Naive thymus-derived CD4-positive, alpha-beta T cell (primary cell): ENCODE measurements at regions of chr12 and their contacts with region 1.

Region 1: DNA sequence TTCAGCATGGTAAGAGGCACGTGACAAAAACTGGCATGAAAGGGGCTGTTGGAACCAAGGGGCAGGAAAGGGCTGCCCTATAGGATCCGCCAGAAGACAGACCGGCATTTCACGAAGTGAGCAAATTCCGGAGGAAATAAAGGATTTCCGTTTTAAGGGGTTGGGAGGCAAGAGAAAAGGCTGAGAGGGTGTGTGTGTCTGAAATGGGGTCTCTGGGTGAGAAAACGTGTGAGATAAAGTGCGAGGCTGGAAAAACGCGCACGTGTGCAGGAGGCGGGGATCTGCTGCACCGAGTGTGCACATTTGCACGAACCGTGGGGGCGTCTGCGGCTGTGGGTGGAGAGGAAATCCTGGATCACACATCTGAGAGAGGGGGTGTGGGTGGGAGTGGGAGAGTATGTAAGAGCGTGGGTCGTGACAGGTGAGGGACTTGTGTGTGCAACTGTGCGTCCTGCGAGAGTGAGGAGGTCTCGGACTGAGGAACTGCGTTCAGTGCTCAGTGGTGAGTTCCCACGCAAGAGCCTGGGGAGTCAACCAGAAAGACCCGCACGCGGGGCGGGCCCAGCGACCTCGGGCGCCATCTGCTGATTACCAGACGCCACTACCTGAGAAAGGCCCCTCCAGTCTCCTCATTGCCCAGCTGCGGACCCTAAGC is 37.0 kb upstream of the P2RX7 start:
- DNase-seq: peak; percentile 60 to 81 (median 70)
- ATAC-seq: peak; percentile 91
- H3K4me3 ChIP-seq: peak overlapping the region; percentile 66
- H3K4me3 Mint-ChIP-seq: peak overlapping the region; percentile 81 to 95 (median 87)
- H3K27ac ChIP-seq: no peak overlapping the region
- H3K27ac Mint-ChIP-seq: peak overlapping the region in 6 of 9 donors; percentile 41 to 88 (median 69)
- H3K4me1 ChIP-seq: peaks cover 34 to 42% of the 10 kb centered on the region in 2 donors
- H3K4me1 Mint-ChIP-seq: peaks cover 28 to 56% (median 52%) of the 10 kb centered on the region in 7 donors
- H3K27me3 ChIP-seq: no peaks in the 10 kb centered on the region
- H3K27me3 Mint-ChIP-seq: peaks cover 0 to 22% (median 4%) of the 10 kb centered on the region in 5 donors

Region 2: DNA sequence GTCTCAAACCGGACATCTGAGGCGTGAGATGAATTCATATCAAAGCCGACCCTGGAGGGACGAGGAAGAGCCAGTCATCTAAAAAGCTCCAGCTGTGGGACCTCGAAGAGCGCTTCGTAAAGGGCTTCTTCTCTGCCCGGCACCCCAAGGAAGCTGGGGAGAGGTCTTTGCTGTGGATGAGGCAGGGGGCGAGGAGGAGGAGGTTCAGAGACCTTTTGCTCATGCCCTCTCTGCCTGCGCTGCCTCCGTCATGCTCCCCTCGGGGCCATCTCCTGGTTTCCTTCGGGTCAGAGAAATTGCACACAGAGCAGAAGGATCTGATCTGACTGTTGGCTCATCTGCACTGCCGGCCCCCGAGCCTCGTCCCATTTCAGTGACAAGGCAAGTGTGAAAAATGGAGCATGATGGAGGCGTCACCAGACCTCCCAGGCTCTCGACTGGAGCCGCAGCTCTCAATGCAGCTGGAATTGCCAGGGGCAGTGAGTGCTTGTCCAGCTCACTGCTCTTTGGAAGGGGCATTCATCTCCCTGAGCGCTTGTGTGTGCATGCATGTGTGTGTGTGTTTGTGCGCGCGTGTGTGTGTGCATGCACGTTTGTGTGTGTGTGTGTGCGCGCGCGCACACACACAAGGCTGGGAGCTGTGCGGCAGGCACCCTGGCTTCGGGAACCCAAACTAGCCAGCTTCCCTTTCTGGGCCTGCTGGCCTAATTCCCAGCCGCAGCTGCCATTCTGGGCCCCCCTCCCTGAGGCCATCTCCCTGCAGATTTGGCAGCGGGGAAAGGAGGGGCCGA is 446.0 kb before region 1 on chr12:
- CTCF ChIA-PET with region 1: no interaction called
- POLR2A ChIA-PET with region 1: no interaction called
- intact Hi-C with region 1: loop called in 1 of 2 experiments (anchors 5 kb)
- DNase-seq: no peak
- ATAC-seq: no peak
- H3K4me3 ChIP-seq: no peak overlapping the region
- H3K4me3 Mint-ChIP-seq: peak overlapping the region in 8 of 10 donors; percentile 31 to 78 (median 49)
- H3K27ac ChIP-seq: no peak overlapping the region
- H3K27ac Mint-ChIP-seq: no peak overlapping the region
- H3K4me1 ChIP-seq: peaks cover 6 to 7% of the 10 kb centered on the region in 2 donors
- H3K4me1 Mint-ChIP-seq: peaks cover 6 to 16% (median 13%) of the 10 kb centered on the region in 7 donors
- H3K27me3 ChIP-seq: peaks cover 3 to 5% of the 10 kb centered on the region in 2 donors
- H3K27me3 Mint-ChIP-seq: peaks cover 42 to 63% (median 58%) of the 10 kb centered on the region in 5 donors

Region 3: GRCh38 chr12:120886199-120887018 is 209.3 kb before region 1 on chr12:
- CTCF ChIA-PET with region 1: no interaction called
- POLR2A ChIA-PET with region 1: no interaction called
- intact Hi-C with region 1: no loop called
- DNase-seq: peak in 5 of 9 donors; percentile 5 to 39 (median 18)
- ATAC-seq: peak; percentile 86
- H3K4me3 ChIP-seq: no peak overlapping the region
- H3K4me3 Mint-ChIP-seq: peak overlapping the region; percentile 39 to 73 (median 54)
- H3K27ac ChIP-seq: no peak overlapping the region
- H3K27ac Mint-ChIP-seq: peak overlapping the region; percentile 1 to 76 (median 22)
- H3K4me1 ChIP-seq: peaks cover 23 to 29% of the 10 kb centered on the region in 2 donors
- H3K4me1 Mint-ChIP-seq: peaks cover 32 to 89% (median 82%) of the 10 kb centered on the region in 7 donors
- H3K27me3 ChIP-seq: no peaks in the 10 kb centered on the region
- H3K27me3 Mint-ChIP-seq: no peaks in the 10 kb centered on the region

Region 4: DNA sequence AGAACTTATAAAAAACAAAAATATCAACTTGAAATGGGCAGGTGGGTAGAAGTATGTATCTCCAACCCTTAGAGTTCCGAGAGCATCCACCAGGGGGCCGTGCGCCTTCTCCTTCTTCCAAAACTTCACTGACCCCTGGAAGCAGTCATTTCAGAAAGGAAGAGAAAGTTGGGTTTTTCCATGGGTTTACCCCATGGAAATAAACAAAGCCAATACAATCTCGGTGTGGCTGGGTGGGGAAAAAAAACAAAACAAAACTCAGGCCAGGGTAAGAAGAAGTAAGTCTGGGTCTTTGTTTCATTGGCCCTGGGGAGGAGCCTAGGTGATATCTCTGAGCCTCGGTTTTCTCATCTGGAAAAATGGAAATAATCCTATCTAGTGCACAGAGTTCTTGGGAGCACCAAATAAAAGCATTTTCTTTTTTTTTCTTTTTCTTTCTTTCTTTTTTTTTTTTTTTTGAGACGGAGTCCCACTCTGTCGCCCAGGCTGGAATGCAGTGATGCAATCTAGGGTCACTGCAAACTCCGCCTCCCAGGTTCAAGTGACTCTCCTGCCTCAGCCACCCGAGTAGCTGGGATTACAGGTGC is 150.9 kb before region 1 on chr12:
- CTCF ChIA-PET with region 1: no interaction called
- POLR2A ChIA-PET with region 1: no interaction called
- intact Hi-C with region 1: loop called in 1 of 2 experiments (anchors 1 kb)
- DNase-seq: peak; percentile 34 to 71 (median 50)
- ATAC-seq: peak; percentile 60
- H3K4me3 ChIP-seq: no peak overlapping the region
- H3K4me3 Mint-ChIP-seq: no peak overlapping the region
- H3K27ac ChIP-seq: no peak overlapping the region
- H3K27ac Mint-ChIP-seq: peak overlapping the region in 2 of 9 donors; percentile 1 to 30
- H3K4me1 ChIP-seq: no peaks in the 10 kb centered on the region
- H3K4me1 Mint-ChIP-seq: peaks cover 0 to 6% (median 2%) of the 10 kb centered on the region in 7 donors
- H3K27me3 ChIP-seq: no peaks in the 10 kb centered on the region
- H3K27me3 Mint-ChIP-seq: peaks cover 0 to 8% (median 0%) of the 10 kb centered on the region in 5 donors

Region 5: GRCh38 chr12:121015825-121016766 is 79.6 kb before region 1 on chr12 and contains the start of gene C12orf43:
- CTCF ChIA-PET with region 1: no interaction called
- POLR2A ChIA-PET with region 1: no interaction called
- intact Hi-C with region 1: loop called (anchors 1 to 5 kb)
- DNase-seq: peak; percentile 74 to 93 (median 89)
- ATAC-seq: peak; percentile 99
- H3K4me3 ChIP-seq: peak within 1 kb of the TSS; percentile 88
- H3K4me3 Mint-ChIP-seq: peak within 1 kb of the TSS; percentile 93 to 99 (median 96)
- H3K27ac ChIP-seq: peak within 1 kb of the TSS; percentile 88
- H3K27ac Mint-ChIP-seq: peak within 1 kb of the TSS; percentile 89 to 97 (median 95)
- H3K4me1 ChIP-seq: peaks cover 6 to 11% of the 10 kb centered on the region in 2 donors
- H3K4me1 Mint-ChIP-seq: peaks cover 17 to 32% (median 24%) of the 10 kb centered on the region in 7 donors
- H3K27me3 ChIP-seq: no peaks in the 10 kb centered on the region
- H3K27me3 Mint-ChIP-seq: no peaks in the 10 kb centered on the region
- total RNA-seq, gene C12orf43: 11.8 to 24.2 (median 17.5) TPM

Region 6: DNA sequence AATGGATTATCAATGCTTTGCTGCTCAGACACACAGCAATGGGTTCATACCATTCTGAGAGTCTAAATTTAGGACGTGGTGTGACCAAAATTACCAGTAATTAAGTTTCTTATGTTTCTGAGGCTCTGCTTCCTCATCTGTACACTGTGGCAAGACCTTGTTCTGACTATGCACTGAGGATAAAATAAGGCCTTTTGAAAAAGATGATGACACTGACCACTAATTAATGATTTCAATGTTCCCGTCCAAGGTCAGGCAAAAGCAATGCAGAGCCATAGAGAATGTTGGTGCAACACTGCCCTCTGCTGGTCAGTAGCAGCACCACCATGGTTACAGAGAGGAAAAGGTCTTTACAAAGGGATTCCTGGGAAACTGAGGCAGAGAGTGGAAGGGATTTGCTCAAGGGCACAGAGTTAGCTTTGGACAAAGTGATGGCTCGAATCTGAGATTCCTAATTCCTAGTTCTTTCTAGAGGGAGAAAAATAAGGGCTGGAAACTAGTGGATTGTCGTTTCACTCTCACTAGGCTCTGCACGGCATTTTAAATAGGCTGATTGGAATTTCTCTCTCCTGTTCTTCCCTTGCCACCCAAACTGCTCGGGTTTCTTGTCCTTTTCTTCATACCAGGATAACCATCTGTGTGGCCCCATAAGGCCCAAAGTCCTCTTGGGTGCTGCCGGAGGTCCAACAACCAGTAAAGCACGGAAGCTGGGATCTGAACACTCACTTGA is 14.7 kb after region 1 on chr12:
- CTCF ChIA-PET with region 1: interaction called, 3 read pairs
- POLR2A ChIA-PET with region 1: interaction called, 3 read pairs
- intact Hi-C with region 1: loop called in 1 of 2 experiments (anchors 1 kb)
- DNase-seq: peak; percentile 29 to 69 (median 50)
- ATAC-seq: peak; percentile 92
- H3K4me3 ChIP-seq: no peak overlapping the region
- H3K4me3 Mint-ChIP-seq: no peak overlapping the region
- H3K27ac ChIP-seq: no peak overlapping the region
- H3K27ac Mint-ChIP-seq: peak overlapping the region in 2 of 9 donors; percentile 1 to 32
- H3K4me1 ChIP-seq: no peaks in the 10 kb centered on the region
- H3K4me1 Mint-ChIP-seq: peaks cover 3 to 12% (median 5%) of the 10 kb centered on the region in 7 donors
- H3K27me3 ChIP-seq: no peaks in the 10 kb centered on the region
- H3K27me3 Mint-ChIP-seq: no peaks in the 10 kb centered on the region

Region 7: GRCh38 chr12:121697098-121697698 is 601.5 kb after region 1 on chr12:
- CTCF ChIA-PET with region 1: no interaction called
- POLR2A ChIA-PET with region 1: no interaction called
- intact Hi-C with region 1: no loop called
- DNase-seq: peak in 7 of 9 donors; percentile 37 to 72 (median 63)
- ATAC-seq: no peak
- H3K4me3 ChIP-seq: no peak overlapping the region
- H3K4me3 Mint-ChIP-seq: no peak overlapping the region
- H3K27ac ChIP-seq: no peak overlapping the region
- H3K27ac Mint-ChIP-seq: peak overlapping the region in 4 of 9 donors; percentile 5 to 41 (median 28)
- H3K4me1 ChIP-seq: no peaks in the 10 kb centered on the region
- H3K4me1 Mint-ChIP-seq: peaks cover 0 to 5% (median 0%) of the 10 kb centered on the region in 7 donors
- H3K27me3 ChIP-seq: no peaks in the 10 kb centered on the region
- H3K27me3 Mint-ChIP-seq: peaks cover 0 to 7% (median 0%) of the 10 kb centered on the region in 5 donors